ENCODE measurements at regions of chr19 and their contacts with region 1.

Region 1: DNA sequence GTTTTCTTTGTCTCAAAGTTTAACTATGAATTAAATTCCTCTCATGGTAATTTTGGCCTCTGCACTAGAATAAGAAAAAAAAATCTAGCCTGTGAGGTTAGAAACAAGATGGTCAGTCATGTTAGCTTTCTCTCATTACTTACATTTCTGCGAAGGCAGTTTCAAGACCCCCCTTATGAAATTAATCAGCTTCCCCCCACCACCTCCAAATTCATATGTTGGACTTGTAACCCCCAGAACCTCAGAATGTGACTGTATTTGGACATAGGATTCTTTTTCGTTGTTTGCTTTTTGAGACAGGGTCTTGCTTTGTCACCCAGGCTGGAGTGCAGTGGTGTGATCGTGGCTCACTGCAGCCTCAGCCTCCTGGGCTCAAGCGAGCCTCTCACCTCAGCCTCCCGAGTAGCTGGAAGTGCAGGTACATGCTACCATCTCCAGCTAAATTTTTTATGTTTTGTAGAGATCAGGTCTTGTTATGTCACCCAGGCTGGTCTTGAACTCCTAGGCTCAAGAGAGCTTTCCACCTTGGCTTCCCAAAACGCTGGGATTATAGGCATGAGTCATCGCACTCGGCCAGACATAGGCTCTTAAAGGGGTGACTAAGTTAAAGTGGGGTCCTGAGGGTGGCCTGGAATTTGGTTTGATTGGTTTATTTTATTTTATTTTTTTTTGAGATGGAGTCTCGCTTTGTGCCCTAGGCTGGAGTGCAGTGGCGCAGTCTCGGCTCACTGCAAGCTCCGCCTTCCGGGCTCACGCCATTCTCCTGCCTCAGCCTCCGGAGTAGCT is 1.4 kb downstream of the PLA2G4C start:
- DNase-seq: no peak
- ATAC-seq: no peak

Region 2: DNA sequence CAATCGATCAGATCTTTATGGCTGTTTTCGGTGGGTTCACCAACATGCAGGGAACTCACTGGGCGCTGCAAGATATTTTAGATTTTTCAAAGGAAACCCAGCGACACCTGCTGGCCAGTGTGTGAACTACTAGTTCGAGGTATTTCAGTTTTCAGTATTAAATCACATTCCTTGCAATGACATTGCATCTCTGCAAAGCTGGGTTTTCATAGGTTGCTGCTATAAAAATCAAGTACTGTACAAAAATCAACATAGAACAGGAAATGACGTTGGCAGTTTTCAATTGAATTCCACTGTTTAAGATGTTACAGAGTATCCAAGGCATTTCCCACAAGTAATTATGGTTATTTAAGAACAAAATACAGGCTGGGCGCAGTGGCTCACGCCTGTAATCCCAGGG is 43.4 kb after region 1 on chr19:
- intact Hi-C with region 1: loop called (anchors 5 kb)
- DNase-seq: peak; percentile 81
- ATAC-seq: peak; percentile 53